ENCODE measurements at regions of chr6 and their contacts with region 1.

Region 1: GRCh38 chr6:26196846-26197648 is 109.8 kb downstream of the HFE start:
- DNase-seq: peak; percentile 94
- H3K4me3 Mint-ChIP-seq: peak overlapping the region; percentile 93
- H3K27ac Mint-ChIP-seq: peak overlapping the region; percentile 96
- H3K4me1 Mint-ChIP-seq: peaks cover 28% of the 10 kb centered on the region
- H3K27me3 Mint-ChIP-seq: no peaks in the 10 kb centered on the region
- CTCF ChIP-seq: no peak

Region 2: GRCh38 chr6:25649611-25650010 is 547.4 kb before region 1 on chr6:
- CTCF ChIA-PET with region 1: no interaction called
- POLR2A ChIA-PET with region 1: no interaction called
- intact Hi-C with region 1: no loop called
- DNase-seq: peak; percentile 32
- H3K4me3 Mint-ChIP-seq: no peak overlapping the region
- H3K27ac Mint-ChIP-seq: no peak overlapping the region
- H3K4me1 Mint-ChIP-seq: no peaks in the 10 kb centered on the region
- H3K27me3 Mint-ChIP-seq: peaks cover 85% of the 10 kb centered on the region
- CTCF ChIP-seq: no peak

Region 3: DNA sequence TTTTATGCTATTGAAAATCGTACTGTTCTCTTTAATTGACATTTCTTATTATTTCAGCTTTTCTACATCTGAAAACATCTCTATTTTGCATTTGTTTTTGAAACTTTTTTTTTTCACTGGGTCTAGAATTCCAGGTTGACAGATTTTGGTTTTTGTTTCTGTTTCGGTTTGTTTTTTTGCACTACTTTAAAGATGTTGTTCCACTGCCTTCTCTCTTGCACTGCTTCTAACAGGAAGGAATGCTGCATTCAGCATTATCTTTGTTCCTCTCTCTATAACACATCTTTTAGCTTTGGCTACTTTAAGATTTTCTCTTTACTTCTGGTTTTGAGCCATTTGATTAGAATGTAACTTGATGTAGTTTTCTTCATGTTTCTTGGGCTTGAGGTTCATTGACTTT is 345.1 kb before region 1 on chr6:
- CTCF ChIA-PET with region 1: no interaction called
- POLR2A ChIA-PET with region 1: no interaction called
- intact Hi-C with region 1: no loop called
- DNase-seq: no peak
- H3K4me3 Mint-ChIP-seq: no peak overlapping the region
- H3K27ac Mint-ChIP-seq: no peak overlapping the region
- H3K4me1 Mint-ChIP-seq: no peaks in the 10 kb centered on the region
- H3K27me3 Mint-ChIP-seq: peaks cover 49% of the 10 kb centered on the region
- CTCF ChIP-seq: no peak

Region 4: DNA sequence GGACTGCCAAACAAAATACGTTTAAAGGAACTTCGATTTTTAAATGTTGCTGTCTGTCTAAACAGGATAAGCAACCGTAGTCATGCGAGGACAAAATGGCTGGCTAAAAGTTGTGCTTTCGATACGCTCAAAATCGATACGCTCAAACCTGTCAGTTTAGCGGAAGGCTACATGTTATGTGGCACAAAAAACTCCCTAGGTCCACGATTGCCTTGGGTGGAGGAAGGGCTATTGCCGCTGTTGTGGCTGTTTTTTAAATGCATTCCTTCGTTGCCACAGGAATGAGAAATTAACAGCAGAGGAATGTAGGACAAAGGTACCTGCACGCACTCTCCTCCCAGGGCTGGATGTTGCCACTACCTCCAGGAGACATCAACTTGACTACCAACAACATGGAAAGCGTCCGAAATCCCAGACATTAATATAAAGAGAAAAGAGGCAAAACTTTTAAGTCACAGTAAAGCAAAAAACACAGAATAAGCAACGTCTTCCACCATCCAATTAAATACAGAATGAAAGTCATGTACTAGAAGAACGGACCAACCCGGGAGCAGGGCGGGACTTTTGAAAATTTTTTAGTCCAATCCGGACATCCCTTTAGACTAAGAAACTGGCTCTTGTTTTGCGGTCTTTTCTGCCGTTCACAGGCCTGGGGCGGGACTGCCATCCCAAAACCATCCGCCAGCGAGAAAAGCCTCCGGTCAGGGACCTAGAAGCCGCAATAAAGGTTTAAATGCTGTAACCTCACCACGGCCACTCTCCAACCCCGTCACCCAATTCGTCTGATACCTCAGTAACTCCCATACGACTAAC is 142.0 kb before region 1 on chr6:
- CTCF ChIA-PET with region 1: no interaction called
- POLR2A ChIA-PET with region 1: interaction called, 70 read pairs
- intact Hi-C with region 1: loop called (anchors 5 kb)
- DNase-seq: peak; percentile 96
- H3K4me3 Mint-ChIP-seq: peak overlapping the region; percentile 74
- H3K27ac Mint-ChIP-seq: peak overlapping the region; percentile 92
- H3K4me1 Mint-ChIP-seq: no peaks in the 10 kb centered on the region
- H3K27me3 Mint-ChIP-seq: no peaks in the 10 kb centered on the region
- CTCF ChIP-seq: no peak

Region 5: DNA sequence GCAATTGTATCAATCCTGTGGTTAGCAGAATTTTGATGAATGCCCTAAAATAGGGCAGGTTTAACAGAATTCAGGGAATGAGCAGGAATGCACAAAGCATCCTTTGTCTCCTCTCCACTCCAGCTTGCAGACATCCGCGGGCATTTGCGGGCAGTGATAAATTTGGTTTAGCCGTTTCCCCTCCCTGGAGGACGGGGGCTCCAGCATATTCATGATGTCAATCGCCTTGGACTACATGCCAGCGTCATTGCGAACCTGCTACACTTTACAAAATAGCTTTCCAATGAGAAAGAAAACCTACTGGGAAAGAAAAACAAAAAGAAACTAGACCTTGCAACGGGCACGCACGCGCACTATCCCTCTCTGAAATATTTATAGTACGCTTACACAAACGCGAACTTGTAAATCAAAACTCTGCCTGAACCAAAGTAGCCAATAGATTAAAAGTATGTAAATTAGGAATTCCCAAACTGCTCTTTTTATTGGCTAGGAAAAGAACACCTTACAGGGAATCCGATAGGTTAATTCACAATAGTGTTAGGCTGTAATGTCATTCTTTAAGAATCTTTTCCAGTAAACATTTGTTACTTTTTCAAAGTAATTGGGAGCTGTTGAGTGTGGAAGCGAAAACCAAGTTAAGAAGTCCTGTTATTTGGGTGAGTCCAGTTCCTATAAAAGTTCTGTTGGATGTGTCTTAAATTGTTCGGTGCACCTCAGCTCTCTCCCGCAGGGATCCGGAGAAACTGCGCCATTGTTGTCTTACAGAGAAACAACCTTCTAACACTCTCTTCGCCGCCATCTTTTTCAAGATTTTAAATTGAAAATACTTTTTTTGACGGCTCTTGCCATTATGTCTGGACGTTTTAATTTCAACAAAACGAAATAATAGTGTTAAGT is 26.9 kb after region 1 on chr6:
- CTCF ChIA-PET with region 1: interaction called, 3 read pairs
- POLR2A ChIA-PET with region 1: interaction called, 189 read pairs
- intact Hi-C with region 1: no loop called
- DNase-seq: peak; percentile 91
- H3K4me3 Mint-ChIP-seq: no peak overlapping the region
- H3K27ac Mint-ChIP-seq: no peak overlapping the region
- H3K4me1 Mint-ChIP-seq: peaks cover 6% of the 10 kb centered on the region
- H3K27me3 Mint-ChIP-seq: no peaks in the 10 kb centered on the region
- CTCF ChIP-seq: no peak

Region 6: GRCh38 chr6:26295691-26296555 is 98.9 kb after region 1 on chr6:
- CTCF ChIA-PET with region 1: no interaction called
- POLR2A ChIA-PET with region 1: interaction called, 10 read pairs
- intact Hi-C with region 1: no loop called
- DNase-seq: peak; percentile 87
- H3K4me3 Mint-ChIP-seq: peak overlapping the region; percentile 63
- H3K27ac Mint-ChIP-seq: peak overlapping the region; percentile 81
- H3K4me1 Mint-ChIP-seq: peaks cover 22% of the 10 kb centered on the region
- H3K27me3 Mint-ChIP-seq: no peaks in the 10 kb centered on the region
- CTCF ChIP-seq: no peak

Region 7: GRCh38 chr6:27809939-27810767 is 1613.1 kb after region 1 on chr6:
- CTCF ChIA-PET with region 1: no interaction called
- POLR2A ChIA-PET with region 1: interaction called, 179 read pairs
- intact Hi-C with region 1: no loop called
- DNase-seq: peak; percentile 96
- H3K4me3 Mint-ChIP-seq: peak overlapping the region; percentile 86
- H3K27ac Mint-ChIP-seq: peak overlapping the region; percentile 94
- H3K4me1 Mint-ChIP-seq: peaks cover 20% of the 10 kb centered on the region
- H3K27me3 Mint-ChIP-seq: no peaks in the 10 kb centered on the region
- CTCF ChIP-seq: no peak

Region 8: GRCh38 chr6:27871924-27872638 is 1675.0 kb after region 1 on chr6:
- CTCF ChIA-PET with region 1: no interaction called
- POLR2A ChIA-PET with region 1: interaction called, 40 read pairs
- intact Hi-C with region 1: no loop called
- DNase-seq: peak; percentile 89
- H3K4me3 Mint-ChIP-seq: peak overlapping the region; percentile 79
- H3K27ac Mint-ChIP-seq: peak overlapping the region; percentile 93
- H3K4me1 Mint-ChIP-seq: peaks cover 2% of the 10 kb centered on the region
- H3K27me3 Mint-ChIP-seq: no peaks in the 10 kb centered on the region
- CTCF ChIP-seq: no peak

Measured in MCF 10A (cell line).